Activated CD4-positive, alpha-beta memory T cell treated with anti-CD3 and anti-CD28 coated beads for 36 hours (primary cell): ENCODE measurements at regions of chr6 and their contacts with region 1.

Region 1: GRCh38 chr6:148760568-148761526 is 14.0 kb downstream of the UST start:
- DNase-seq: peak; percentile 75
- H3K4me3 Mint-ChIP-seq: peak overlapping the region; percentile 65
- H3K27ac Mint-ChIP-seq: peak overlapping the region; percentile 88
- H3K4me1 Mint-ChIP-seq: peaks cover 73% of the 10 kb centered on the region
- H3K27me3 Mint-ChIP-seq: peaks cover 8% of the 10 kb centered on the region

Region 2: DNA sequence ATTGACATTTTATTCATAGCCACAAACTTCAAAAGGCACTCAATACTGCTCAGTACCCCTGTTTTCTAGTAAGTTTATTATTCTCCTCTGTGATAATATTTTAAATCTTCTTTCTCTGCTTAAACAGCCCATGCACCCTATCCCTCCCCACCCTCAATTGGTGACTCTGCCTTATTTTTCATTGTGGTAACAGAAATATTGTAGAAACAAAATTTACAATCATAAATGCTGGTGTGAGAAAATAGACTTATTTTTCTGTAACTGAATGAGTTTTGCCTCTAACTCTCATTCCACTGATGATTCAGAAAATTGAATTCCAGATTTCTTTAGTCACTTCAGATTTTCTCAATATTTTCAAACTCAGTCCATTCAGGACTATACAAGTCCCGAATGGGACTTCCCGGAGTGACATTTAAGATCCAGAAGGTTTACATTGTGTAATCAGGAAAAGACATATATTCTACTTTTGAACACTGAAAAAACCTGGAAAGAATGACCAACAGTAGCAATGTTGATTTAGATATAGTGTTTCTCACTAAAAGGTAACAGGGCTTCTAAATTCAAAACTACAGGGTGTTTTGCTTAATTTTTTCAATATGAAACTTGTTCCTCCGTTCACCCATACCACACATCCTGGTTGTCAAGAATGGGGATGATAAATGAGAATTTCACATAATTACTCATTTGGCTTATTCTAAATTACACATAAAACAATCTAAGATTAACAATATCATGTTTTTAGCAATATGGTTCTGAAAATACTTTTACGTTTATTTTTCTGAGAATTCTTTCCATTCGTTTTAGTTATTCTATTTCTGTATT is 48.8 kb before region 1 on chr6:
- CTCF ChIA-PET with region 1: interaction called, 4 read pairs
- POLR2A ChIA-PET with region 1: no interaction called
- intact Hi-C with region 1: loop called (anchors 1 kb)
- DNase-seq: no peak
- H3K4me3 Mint-ChIP-seq: no peak overlapping the region
- H3K27ac Mint-ChIP-seq: peak overlapping the region; percentile 64
- H3K4me1 Mint-ChIP-seq: peaks cover 12% of the 10 kb centered on the region
- H3K27me3 Mint-ChIP-seq: peaks cover 5% of the 10 kb centered on the region

Region 3: DNA sequence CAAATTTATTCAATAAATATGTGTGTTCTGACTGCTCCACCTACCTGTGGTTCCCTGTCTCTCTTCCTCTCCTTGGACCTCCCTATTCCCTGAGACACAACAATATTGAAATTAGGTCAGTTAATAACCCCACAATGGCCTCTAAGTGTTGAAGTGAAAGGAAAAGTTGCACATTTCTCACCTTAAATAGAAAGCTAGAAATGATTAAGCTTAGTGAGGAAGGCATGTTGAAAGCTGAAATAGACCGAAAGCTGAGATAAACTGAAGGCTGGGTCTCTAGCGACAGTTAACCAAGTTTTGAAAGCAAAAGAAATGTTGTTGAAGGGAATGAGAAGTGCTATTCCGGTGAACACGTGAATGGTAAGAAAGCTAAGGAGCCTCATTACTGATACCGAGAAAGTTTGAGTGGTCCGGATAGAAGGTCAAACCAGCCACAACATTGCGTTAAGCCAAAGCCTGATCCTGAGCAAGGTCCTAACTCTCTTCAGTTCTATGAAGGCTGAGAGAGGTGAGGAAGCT is 20.1 kb after region 1 on chr6:
- CTCF ChIA-PET with region 1: interaction called, 10 read pairs
- POLR2A ChIA-PET with region 1: interaction called, 14 read pairs
- intact Hi-C with region 1: loop called (anchors 1 kb)
- DNase-seq: peak; percentile 49
- H3K4me3 Mint-ChIP-seq: peak overlapping the region; percentile 52
- H3K27ac Mint-ChIP-seq: peak overlapping the region; percentile 78
- H3K4me1 Mint-ChIP-seq: peaks cover 36% of the 10 kb centered on the region
- H3K27me3 Mint-ChIP-seq: no peaks in the 10 kb centered on the region

Region 4: DNA sequence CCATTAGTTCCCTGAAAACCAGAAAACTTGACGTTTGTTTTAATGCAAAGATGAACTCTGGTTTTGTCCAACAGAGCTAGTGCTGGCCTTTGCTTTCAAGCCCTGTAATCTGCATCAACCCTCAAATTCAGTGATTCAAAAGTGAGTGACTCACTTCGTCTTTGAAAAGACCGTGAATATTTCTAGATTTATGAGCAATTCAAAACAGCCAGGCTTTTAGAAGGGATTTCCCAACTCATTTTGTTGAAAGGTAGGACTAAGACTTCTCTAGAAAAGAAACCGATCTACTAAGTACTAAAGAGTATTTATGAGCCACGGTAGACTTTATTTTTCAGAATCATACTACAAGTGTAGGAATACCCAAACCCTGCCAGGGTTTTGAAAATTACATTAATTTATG is 107.5 kb after region 1 on chr6:
- CTCF ChIA-PET with region 1: interaction called, 3 read pairs
- POLR2A ChIA-PET with region 1: no interaction called
- intact Hi-C with region 1: loop called (anchors 1 kb)
- DNase-seq: no peak
- H3K4me3 Mint-ChIP-seq: peak overlapping the region; percentile 23
- H3K27ac Mint-ChIP-seq: peak overlapping the region; percentile 88
- H3K4me1 Mint-ChIP-seq: peaks cover 55% of the 10 kb centered on the region
- H3K27me3 Mint-ChIP-seq: no peaks in the 10 kb centered on the region